ENCODE measurements at regions of chr5 and their contacts with region 1.

Region 1: GRCh38 chr5:159098603-159099436 is 896 bp downstream of the EBF1 start:
- DNase-seq: peak; percentile 39
- ATAC-seq: peak; percentile 2 to 26

Region 2: DNA sequence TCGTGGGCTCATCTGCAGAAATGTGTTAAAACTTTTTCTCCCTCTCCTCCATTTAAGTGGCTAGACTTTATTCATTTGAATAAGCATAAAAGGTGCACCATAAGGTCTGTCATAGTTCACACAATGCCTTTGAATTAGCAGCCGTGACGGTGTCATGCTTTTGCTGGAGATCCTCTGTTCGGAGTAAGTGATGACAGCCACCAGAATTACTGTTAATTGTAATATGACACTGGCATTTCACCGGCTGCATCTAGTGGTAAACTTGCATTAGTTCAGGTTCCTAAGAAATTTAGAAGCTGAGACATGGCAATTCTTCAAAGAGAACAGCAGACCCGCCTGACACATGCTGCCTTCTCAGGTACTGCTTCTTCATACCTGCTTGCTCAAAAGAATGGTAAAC is 240.8 kb before region 1 on chr5:
- intact Hi-C with region 1: no loop called
- DNase-seq: no peak
- ATAC-seq: no peak

Region 3: GRCh38 chr5:158875272-158875679 is 223.5 kb before region 1 on chr5:
- intact Hi-C with region 1: loop called in 1 of 2 experiments (anchors 10 kb)
- DNase-seq: no peak
- ATAC-seq: peak in 1 of 2 donors; percentile 38

Region 4: GRCh38 chr5:159049844-159050315 is 48.9 kb before region 1 on chr5:
- intact Hi-C with region 1: loop called in 1 of 2 experiments (anchors 5 kb)
- DNase-seq: no peak
- ATAC-seq: peak; percentile 36 to 69